B cell (primary cell): ENCODE measurements at regions of chr18 and their contacts with region 1.

Region 1: GRCh38 chr18:3447895-3448837 is 1.8 kb upstream of the TGIF1 start:
- DNase-seq: peak; percentile 94
- ATAC-seq: peak; percentile 47
- H3K4me3 ChIP-seq: peak overlapping the region; percentile 75 to 98 (median 92)
- H3K4me3 Mint-ChIP-seq: peak overlapping the region; percentile 99
- H3K27ac ChIP-seq: peak overlapping the region; percentile 99 to 100
- H3K27ac Mint-ChIP-seq: peak overlapping the region; percentile 96
- H3K4me1 ChIP-seq: peaks cover 9 to 42% of the 10 kb centered on the region in 2 donors
- H3K4me1 Mint-ChIP-seq: peaks cover 20% of the 10 kb centered on the region
- H3K27me3 ChIP-seq: no peaks in the 10 kb centered on the region
- H3K27me3 Mint-ChIP-seq: no peaks in the 10 kb centered on the region
- CTCF ChIP-seq: no peak

Region 2: GRCh38 chr18:2655178-2655953 is 792.8 kb before region 1 on chr18 and contains the start of gene SMCHD1:
- CTCF ChIA-PET with region 1: no interaction called
- POLR2A ChIA-PET with region 1: no interaction called
- intact Hi-C with region 1: loop called (anchors 10 kb)
- DNase-seq: peak; percentile 96
- ATAC-seq: peak; percentile 78
- H3K4me3 ChIP-seq: peak within 1 kb of the TSS; percentile 86 to 99 (median 96)
- H3K4me3 Mint-ChIP-seq: peak within 1 kb of the TSS; percentile 98
- H3K27ac ChIP-seq: peak within 1 kb of the TSS; percentile 97 to 100
- H3K27ac Mint-ChIP-seq: peak within 1 kb of the TSS; percentile 98
- H3K4me1 ChIP-seq: peaks cover 32 to 33% of the 10 kb centered on the region in 2 donors
- H3K4me1 Mint-ChIP-seq: peaks cover 37% of the 10 kb centered on the region
- H3K27me3 ChIP-seq: no peaks in the 10 kb centered on the region
- H3K27me3 Mint-ChIP-seq: no peaks in the 10 kb centered on the region
- CTCF ChIP-seq: no peak
- total RNA-seq, gene SMCHD1: 380 and 443 TPM in 2 replicates

Region 3: GRCh38 chr18:3261371-3262246 is 186.6 kb before region 1 on chr18 and contains the start of gene MYL12B:
- CTCF ChIA-PET with region 1: interaction called, 3 read pairs
- POLR2A ChIA-PET with region 1: interaction called, 6 read pairs
- intact Hi-C with region 1: loop called (anchors 5 kb)
- DNase-seq: peak; percentile 93
- ATAC-seq: peak; percentile 80
- H3K4me3 ChIP-seq: peak within 1 kb of the TSS; percentile 75 to 96 (median 86)
- H3K4me3 Mint-ChIP-seq: peak within 1 kb of the TSS; percentile 88
- H3K27ac ChIP-seq: peak within 1 kb of the TSS; percentile 86 to 97
- H3K27ac Mint-ChIP-seq: peak within 1 kb of the TSS; percentile 100
- H3K4me1 ChIP-seq: peaks cover 70 to 73% of the 10 kb centered on the region in 2 donors
- H3K4me1 Mint-ChIP-seq: peaks cover 77% of the 10 kb centered on the region
- H3K27me3 ChIP-seq: no peaks in the 10 kb centered on the region
- H3K27me3 Mint-ChIP-seq: no peaks in the 10 kb centered on the region
- CTCF ChIP-seq: no peak
- total RNA-seq, gene MYL12B: 124 and 127 TPM in 2 replicates

Region 4: DNA sequence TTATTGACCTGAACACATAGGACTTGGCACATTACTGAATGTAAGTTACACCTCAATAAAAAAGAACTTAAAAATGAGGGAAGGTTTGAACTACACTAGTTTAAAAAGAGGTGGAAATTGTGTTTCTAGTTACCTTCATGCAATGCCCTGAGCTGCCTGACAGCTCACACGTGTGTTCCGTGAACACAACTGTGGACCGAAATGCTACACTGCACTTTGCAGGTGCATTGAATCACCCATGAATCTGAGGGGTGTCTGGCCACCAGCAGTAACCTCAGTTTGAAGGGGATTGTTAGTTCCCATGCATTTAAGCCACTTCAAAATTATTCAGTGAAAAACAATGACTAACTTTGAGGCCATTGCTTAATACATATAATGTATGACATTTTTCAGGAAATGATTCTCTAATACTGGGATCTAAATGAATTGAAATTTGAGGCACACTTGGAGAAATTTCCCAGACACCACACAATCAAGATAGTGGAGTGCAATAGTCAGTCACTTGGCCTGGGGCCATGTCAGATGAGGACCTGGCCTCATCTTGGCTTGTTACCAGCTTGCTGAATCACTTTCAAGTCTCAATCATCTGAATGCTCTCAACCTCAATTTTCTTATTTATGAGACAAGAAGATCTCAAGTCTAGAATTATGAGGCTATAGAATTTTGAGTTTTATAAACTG is 126.9 kb before region 1 on chr18:
- CTCF ChIA-PET with region 1: interaction called, 41 read pairs
- POLR2A ChIA-PET with region 1: no interaction called
- intact Hi-C with region 1: no loop called
- DNase-seq: no peak
- ATAC-seq: no peak
- H3K4me3 ChIP-seq: no peak overlapping the region
- H3K4me3 Mint-ChIP-seq: no peak overlapping the region
- H3K27ac ChIP-seq: no peak overlapping the region
- H3K27ac Mint-ChIP-seq: no peak overlapping the region
- H3K4me1 ChIP-seq: peaks cover 0 to 6% of the 10 kb centered on the region in 2 donors
- H3K4me1 Mint-ChIP-seq: peaks cover 13% of the 10 kb centered on the region
- H3K27me3 ChIP-seq: no peaks in the 10 kb centered on the region
- H3K27me3 Mint-ChIP-seq: peaks cover 4% of the 10 kb centered on the region
- CTCF ChIP-seq: no peak

Region 5: GRCh38 chr18:3493501-3494244 is 45.5 kb after region 1 on chr18:
- CTCF ChIA-PET with region 1: interaction called, 7 read pairs
- POLR2A ChIA-PET with region 1: interaction called, 4 read pairs
- intact Hi-C with region 1: loop called (anchors 5 kb)
- DNase-seq: peak; percentile 64
- ATAC-seq: peak; percentile 50
- H3K4me3 ChIP-seq: peak overlapping the region; percentile 26 to 52 (median 44)
- H3K4me3 Mint-ChIP-seq: peak overlapping the region; percentile 87
- H3K27ac ChIP-seq: peak overlapping the region; percentile 25 to 70
- H3K27ac Mint-ChIP-seq: peak overlapping the region; percentile 88
- H3K4me1 ChIP-seq: peaks cover 13 to 25% of the 10 kb centered on the region in 2 donors
- H3K4me1 Mint-ChIP-seq: peaks cover 37% of the 10 kb centered on the region
- H3K27me3 ChIP-seq: peaks cover 0 to 4% (median 0%) of the 10 kb centered on the region in 4 experiments
- H3K27me3 Mint-ChIP-seq: peaks cover 8% of the 10 kb centered on the region
- CTCF ChIP-seq: no peak

Region 6: GRCh38 chr18:3665780-3666525 is 217.8 kb after region 1 on chr18:
- CTCF ChIA-PET with region 1: interaction called, 58 read pairs
- POLR2A ChIA-PET with region 1: interaction called, 4 read pairs
- intact Hi-C with region 1: no loop called
- DNase-seq: peak; percentile 80
- ATAC-seq: peak; percentile 88
- H3K4me3 ChIP-seq: no peak overlapping the region
- H3K4me3 Mint-ChIP-seq: peak overlapping the region; percentile 69
- H3K27ac ChIP-seq: no peak overlapping the region
- H3K27ac Mint-ChIP-seq: no peak overlapping the region
- H3K4me1 ChIP-seq: peaks cover 9 to 12% of the 10 kb centered on the region in 2 donors
- H3K4me1 Mint-ChIP-seq: peaks cover 16% of the 10 kb centered on the region
- H3K27me3 ChIP-seq: no peaks in the 10 kb centered on the region
- H3K27me3 Mint-ChIP-seq: no peaks in the 10 kb centered on the region
- CTCF ChIP-seq: peak; percentile 97

Region 7: DNA sequence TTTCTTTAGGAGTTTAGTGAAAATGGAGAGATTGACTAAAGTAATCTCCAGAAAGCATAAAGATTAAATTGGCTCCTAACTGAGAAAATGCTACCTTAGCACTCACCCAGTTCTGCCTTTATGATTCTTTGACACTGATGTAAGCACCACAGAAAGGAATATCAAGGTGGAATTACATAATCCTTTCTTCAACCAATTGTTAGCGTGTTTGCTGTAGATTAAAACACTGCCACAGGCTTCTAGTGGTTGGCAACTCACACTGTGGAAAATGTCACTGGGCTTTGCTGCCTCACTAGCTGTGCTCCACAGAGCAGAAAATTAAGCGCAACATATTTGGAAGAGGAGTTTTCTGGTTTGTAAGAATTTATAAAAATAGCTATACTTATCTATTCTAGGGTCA is 902.8 kb after region 1 on chr18:
- CTCF ChIA-PET with region 1: no interaction called
- POLR2A ChIA-PET with region 1: no interaction called
- intact Hi-C with region 1: no loop called
- DNase-seq: no peak
- ATAC-seq: no peak
- H3K4me3 ChIP-seq: no peak overlapping the region
- H3K4me3 Mint-ChIP-seq: no peak overlapping the region
- H3K27ac ChIP-seq: no peak overlapping the region
- H3K27ac Mint-ChIP-seq: no peak overlapping the region
- H3K4me1 ChIP-seq: no peaks in the 10 kb centered on the region
- H3K4me1 Mint-ChIP-seq: no peaks in the 10 kb centered on the region
- H3K27me3 ChIP-seq: no peaks in the 10 kb centered on the region
- H3K27me3 Mint-ChIP-seq: no peaks in the 10 kb centered on the region
- CTCF ChIP-seq: no peak